Calu3 (cell line): ENCODE measurements at regions of chr16 and their contacts with region 1.

Region 1: DNA sequence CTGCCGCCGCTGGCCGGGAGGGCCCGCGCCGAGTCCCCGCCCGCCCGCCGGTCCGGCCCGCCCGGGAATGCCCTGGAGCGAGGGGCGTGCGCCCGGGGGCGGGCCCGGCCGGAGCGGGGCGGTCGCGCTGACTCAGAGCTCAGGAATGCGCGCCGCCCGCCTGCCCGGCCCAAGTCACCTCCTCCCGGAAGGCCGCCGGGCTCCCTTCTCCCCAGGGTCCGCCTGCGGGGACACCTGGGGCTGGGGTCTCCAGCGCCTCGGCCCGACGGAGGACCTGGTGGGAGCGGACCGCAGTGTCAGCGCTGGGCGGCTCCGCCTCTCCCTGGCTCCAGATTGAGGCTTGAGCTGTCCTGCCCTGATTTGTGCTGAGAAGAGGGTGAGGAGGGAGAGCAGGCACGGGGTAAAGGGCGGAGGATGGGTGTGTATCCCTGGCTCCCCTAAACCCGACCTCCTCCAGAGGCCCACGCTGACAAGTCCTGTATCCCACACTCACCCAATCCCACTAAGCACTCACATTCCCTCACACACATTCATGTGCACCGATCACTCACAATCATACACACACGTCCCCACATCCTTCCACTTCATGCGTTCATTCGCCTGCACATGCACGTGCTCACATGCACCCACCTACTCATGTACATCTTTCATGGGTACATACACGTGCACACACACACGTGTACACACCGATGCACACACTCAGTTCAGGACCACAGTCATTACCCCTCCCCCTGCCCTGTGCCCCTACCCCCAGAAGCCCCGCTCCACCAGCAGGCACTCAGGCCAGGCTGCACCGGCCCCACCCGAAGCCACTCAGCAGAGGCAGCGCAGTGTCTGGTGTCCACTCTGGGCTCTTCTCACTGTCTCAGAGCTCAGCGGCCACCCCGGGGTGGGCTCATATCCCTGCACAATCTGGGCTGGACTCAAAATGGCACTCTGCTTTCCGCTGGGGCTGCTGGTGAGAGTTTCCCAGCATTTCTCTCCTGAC is at the start of gene RHBDF1:
- DNase-seq: peak; percentile 82
- H3K4me3 Mint-ChIP-seq: peak within 1 kb of the TSS; percentile 83
- H3K27ac Mint-ChIP-seq: peak within 1 kb of the TSS; percentile 92
- H3K4me1 Mint-ChIP-seq: peaks cover 40% of the 10 kb centered on the region
- H3K27me3 Mint-ChIP-seq: no peaks in the 10 kb centered on the region
- CTCF ChIP-seq: no peak
- total RNA-seq, gene RHBDF1: 47.3 and 60.2 TPM in 2 replicates

Region 2: DNA sequence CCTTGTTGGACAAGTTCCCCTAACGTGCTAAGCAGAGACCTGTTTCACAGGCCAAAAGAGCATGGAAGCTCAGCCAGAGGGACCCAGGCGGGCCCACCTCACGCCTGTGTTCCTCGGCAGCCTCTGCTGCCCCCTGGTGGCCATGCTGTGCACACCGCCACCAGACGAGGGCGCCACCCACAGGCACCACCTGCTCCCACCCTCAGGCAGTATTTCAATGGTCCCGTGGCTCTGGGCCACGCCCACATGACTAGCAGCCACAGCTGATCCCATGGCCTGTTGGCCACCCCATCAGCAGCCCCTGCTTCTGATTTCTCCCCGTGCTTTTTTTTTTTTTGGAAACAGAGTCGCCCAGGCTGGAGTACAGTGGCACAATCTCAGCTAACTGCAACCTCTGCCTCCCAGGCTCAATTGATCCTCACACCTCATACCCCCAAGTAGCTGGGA is 24.1 kb after region 1 on chr16:
- CTCF ChIA-PET with region 1: interaction called, 13 read pairs
- intact Hi-C with region 1: no loop called
- DNase-seq: peak; percentile 94
- H3K4me3 Mint-ChIP-seq: no peak overlapping the region
- H3K27ac Mint-ChIP-seq: no peak overlapping the region
- H3K4me1 Mint-ChIP-seq: no peaks in the 10 kb centered on the region
- H3K27me3 Mint-ChIP-seq: no peaks in the 10 kb centered on the region
- CTCF ChIP-seq: peak; percentile 99

Region 3: GRCh38 chr16:1481906-1482835 is 1409.3 kb after region 1 on chr16:
- CTCF ChIA-PET with region 1: no interaction called
- intact Hi-C with region 1: no loop called
- DNase-seq: peak; percentile 26
- H3K4me3 Mint-ChIP-seq: no peak overlapping the region
- H3K27ac Mint-ChIP-seq: no peak overlapping the region
- H3K4me1 Mint-ChIP-seq: no peaks in the 10 kb centered on the region
- H3K27me3 Mint-ChIP-seq: peaks cover 56% of the 10 kb centered on the region
- CTCF ChIP-seq: no peak